PC-9 (cell line): ENCODE measurements at regions of chr1 and their contacts with region 1.

Region 1: GRCh38 chr1:43934101-43934985 is 742 bp downstream of the ARTN start:
- DNase-seq: peak; percentile 64 to 90
- H3K4me3 ChIP-seq: peak overlapping the region; percentile 90
- H3K27ac ChIP-seq: peak overlapping the region; percentile 84
- H3K4me1 ChIP-seq: peaks cover 43% of the 10 kb centered on the region
- H3K27me3 ChIP-seq: no peaks in the 10 kb centered on the region
- CTCF ChIP-seq: peak; percentile 90

Region 2: GRCh38 chr1:43509007-43509722 is 425.2 kb before region 1 on chr1:
- CTCF ChIA-PET with region 1: no interaction called
- POLR2A ChIA-PET with region 1: no interaction called
- intact Hi-C with region 1: no loop called
- DNase-seq: peak; percentile 36 to 86
- H3K4me3 ChIP-seq: peak overlapping the region; percentile 37; the same call in 1 of the 2 replicates
- H3K27ac ChIP-seq: peak overlapping the region; percentile 95
- H3K4me1 ChIP-seq: peaks cover 35% of the 10 kb centered on the region
- H3K27me3 ChIP-seq: no peaks in the 10 kb centered on the region
- CTCF ChIP-seq: no peak

Region 3: DNA sequence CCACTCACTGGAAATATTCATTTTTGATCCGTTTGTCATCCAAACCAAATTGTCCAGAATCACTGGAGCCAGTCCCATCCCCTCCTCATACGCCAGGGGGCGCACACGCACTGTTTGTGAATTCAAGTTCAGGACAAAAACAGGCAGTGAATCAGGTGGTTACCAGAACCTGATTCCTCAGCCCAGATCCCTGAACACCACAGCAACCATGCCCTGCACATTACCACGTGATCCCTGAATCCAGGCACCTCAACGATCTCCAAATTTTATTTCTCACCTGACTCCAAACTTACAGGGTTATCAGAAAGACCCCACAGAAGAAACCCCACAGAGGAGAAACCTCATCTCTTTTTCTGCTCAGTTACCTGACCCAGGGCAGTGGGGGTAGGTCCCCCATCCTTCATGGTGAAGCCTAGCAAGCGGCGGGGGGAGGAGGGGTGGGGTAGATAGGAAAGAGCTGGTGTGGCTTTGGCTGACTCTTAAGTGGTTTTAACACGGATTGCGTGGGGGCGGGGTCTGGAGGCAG is 405.1 kb before region 1 on chr1:
- CTCF ChIA-PET with region 1: interaction called, 8 read pairs
- POLR2A ChIA-PET with region 1: interaction called, 3 read pairs
- intact Hi-C with region 1: loop called (anchors 1 kb)
- DNase-seq: peak; percentile 64 to 82
- H3K4me3 ChIP-seq: no peak overlapping the region
- H3K27ac ChIP-seq: no peak overlapping the region
- H3K4me1 ChIP-seq: peaks cover 40% of the 10 kb centered on the region
- H3K27me3 ChIP-seq: no peaks in the 10 kb centered on the region
- CTCF ChIP-seq: peak; percentile 94

Region 4: GRCh38 chr1:43650310-43651085 is 283.8 kb before region 1 on chr1:
- CTCF ChIA-PET with region 1: interaction called, 7 read pairs
- POLR2A ChIA-PET with region 1: interaction called, 12 read pairs
- intact Hi-C with region 1: no loop called
- DNase-seq: peak; percentile 92 to 95
- H3K4me3 ChIP-seq: peak overlapping the region; percentile 86
- H3K27ac ChIP-seq: peak overlapping the region; percentile 70
- H3K4me1 ChIP-seq: peaks cover 25% of the 10 kb centered on the region
- H3K27me3 ChIP-seq: no peaks in the 10 kb centered on the region
- CTCF ChIP-seq: no peak

Region 5: GRCh38 chr1:43666608-43667007 is 267.7 kb before region 1 on chr1:
- CTCF ChIA-PET with region 1: no interaction called
- POLR2A ChIA-PET with region 1: no interaction called
- intact Hi-C with region 1: no loop called
- DNase-seq: no peak
- H3K4me3 ChIP-seq: no peak overlapping the region
- H3K27ac ChIP-seq: no peak overlapping the region
- H3K4me1 ChIP-seq: no peaks in the 10 kb centered on the region
- H3K27me3 ChIP-seq: no peaks in the 10 kb centered on the region
- CTCF ChIP-seq: no peak

Region 6: DNA sequence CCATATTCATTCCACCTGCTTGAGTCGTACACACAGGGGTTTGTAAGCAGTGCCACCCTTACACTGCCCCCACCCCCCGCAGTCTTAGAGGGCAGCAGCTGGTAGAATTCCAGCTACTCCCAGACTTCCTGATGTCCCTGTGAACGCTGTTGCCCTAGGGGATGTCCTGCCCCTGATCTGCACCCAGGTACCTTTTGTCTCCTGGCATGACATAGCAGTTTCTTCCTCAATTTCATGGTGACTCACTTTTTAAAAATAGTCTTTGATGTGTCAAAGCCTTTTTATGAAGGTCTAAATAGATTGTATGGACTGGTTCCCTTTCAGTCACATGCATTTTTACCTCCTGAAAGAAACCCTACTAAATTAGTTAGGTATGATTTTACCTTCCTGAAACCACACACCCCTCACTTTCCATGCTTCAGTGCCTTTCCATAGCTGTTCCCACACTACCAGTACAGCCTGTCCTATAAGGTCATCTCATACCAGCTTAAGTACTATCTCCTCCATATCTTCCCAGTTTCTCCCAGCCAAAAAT is 150.6 kb before region 1 on chr1:
- CTCF ChIA-PET with region 1: interaction called, 22 read pairs
- POLR2A ChIA-PET with region 1: interaction called, 4 read pairs
- intact Hi-C with region 1: loop called (anchors 1 kb)
- DNase-seq: peak; percentile 93 to 98
- H3K4me3 ChIP-seq: no peak overlapping the region; the same call in 1 of the 2 replicates
- H3K27ac ChIP-seq: peak overlapping the region; percentile 99
- H3K4me1 ChIP-seq: peaks cover 48% of the 10 kb centered on the region
- H3K27me3 ChIP-seq: no peaks in the 10 kb centered on the region
- CTCF ChIP-seq: no peak

Region 7: GRCh38 chr1:43946236-43947060 is 12.1 kb after region 1 on chr1 and contains the start of gene IPO13:
- CTCF ChIA-PET with region 1: interaction called, 11 read pairs
- POLR2A ChIA-PET with region 1: no interaction called
- intact Hi-C with region 1: no loop called
- DNase-seq: peak; percentile 86 to 98
- H3K4me3 ChIP-seq: peak within 1 kb of the TSS; percentile 74
- H3K27ac ChIP-seq: peak within 1 kb of the TSS; percentile 75
- H3K4me1 ChIP-seq: peaks cover 26% of the 10 kb centered on the region
- H3K27me3 ChIP-seq: no peaks in the 10 kb centered on the region
- CTCF ChIP-seq: peak; percentile 79
- total RNA-seq, gene IPO13: 25.0 and 27.2 TPM in 2 replicates